MCF 10A (cell line): ENCODE measurements at regions of chr12 and their contacts with region 1.

Region 1: DNA sequence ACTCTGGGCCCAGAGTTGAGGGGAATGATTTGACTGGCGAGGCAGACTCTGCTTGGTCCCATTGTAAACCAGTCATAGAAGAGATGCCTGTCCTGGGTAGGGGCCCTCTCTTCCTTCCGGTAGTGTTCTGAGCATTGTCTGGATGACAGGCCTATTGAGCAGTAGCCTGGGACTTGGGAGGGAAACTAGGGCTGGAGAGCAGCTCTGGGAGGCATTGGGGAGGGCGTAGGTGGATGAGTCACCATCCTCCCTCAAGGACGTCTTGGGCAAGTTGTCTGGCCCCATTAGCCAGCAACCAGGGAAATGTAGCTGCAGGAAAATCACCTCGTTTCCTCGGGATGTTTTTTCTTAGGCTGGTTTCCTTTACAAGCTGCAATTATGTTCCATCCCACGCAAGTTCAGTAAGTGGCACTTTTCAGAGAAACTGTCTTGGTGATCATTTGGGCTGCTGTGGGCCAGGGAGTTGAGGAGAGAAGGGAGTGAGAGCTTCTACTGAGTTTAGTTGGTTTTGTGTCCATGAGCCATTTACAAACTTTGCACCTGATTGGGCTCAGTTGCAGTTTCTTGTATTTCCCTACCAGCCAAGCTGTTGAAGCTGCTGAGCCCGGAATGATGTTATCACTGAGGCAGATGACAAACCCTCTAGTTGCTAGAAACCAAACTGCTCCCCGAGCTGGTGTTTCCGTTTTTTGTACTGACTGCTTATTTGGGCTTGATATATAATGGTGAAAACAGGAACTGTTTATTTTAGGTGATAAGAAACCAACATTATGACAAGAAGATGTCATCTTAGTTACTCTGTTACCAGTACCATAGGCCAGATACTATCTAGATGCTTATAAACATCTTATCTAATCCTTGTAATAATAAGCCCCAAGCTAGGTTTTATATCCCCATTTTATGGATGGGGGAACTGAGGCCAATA is 147.6 kb downstream of the CHST11 start:
- DNase-seq: peak; percentile 96
- H3K4me3 Mint-ChIP-seq: peak overlapping the region; percentile 19
- H3K27ac Mint-ChIP-seq: peak overlapping the region; percentile 20
- H3K4me1 Mint-ChIP-seq: peaks cover 30% of the 10 kb centered on the region
- H3K27me3 Mint-ChIP-seq: no peaks in the 10 kb centered on the region
- CTCF ChIP-seq: no peak

Region 2: DNA sequence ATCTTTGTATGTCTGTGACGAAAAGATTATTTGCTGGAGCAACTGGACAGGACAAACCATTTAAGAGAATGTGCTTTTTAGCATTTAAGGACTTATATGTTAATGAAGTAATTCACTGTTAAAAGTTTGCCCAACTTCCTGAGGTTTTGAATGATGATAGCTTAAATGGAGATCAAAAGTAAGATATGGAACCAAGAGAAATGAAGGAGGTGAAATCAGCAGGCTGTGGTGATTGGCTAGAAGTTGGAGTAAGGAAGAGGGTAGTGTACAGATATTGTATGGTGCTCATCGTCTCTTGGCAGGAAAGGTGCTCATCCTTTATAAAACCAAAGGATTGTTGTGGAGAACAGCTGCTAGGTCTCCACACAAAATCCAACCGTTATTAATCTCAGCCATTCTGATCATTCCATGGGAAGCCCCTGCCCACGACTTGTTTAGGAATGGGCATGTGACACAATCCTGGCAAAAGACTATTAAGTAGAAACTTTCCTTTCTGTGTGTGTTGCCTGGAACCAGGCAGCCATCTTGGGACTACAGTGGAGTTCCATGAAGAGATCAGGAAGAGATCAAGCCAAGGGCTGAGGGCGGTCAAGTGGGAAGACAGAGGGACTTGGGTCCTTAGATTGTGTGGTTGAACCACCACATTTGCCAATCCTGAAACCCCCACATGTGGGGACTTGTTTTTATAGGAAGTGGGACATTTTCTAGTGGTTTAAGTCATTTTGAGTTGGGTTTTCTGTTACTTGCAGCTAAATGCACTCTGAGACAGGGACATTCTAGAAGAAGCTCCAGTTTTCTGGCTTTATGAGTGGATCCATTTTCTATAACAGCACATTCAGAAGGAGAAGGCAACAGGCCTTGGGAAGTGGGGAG is 204.4 kb before region 1 on chr12:
- CTCF ChIA-PET with region 1: no interaction called
- POLR2A ChIA-PET with region 1: no interaction called
- intact Hi-C with region 1: no loop called
- DNase-seq: no peak
- H3K4me3 Mint-ChIP-seq: no peak overlapping the region
- H3K27ac Mint-ChIP-seq: no peak overlapping the region
- H3K4me1 Mint-ChIP-seq: no peaks in the 10 kb centered on the region
- H3K27me3 Mint-ChIP-seq: no peaks in the 10 kb centered on the region
- CTCF ChIP-seq: no peak

Region 3: DNA sequence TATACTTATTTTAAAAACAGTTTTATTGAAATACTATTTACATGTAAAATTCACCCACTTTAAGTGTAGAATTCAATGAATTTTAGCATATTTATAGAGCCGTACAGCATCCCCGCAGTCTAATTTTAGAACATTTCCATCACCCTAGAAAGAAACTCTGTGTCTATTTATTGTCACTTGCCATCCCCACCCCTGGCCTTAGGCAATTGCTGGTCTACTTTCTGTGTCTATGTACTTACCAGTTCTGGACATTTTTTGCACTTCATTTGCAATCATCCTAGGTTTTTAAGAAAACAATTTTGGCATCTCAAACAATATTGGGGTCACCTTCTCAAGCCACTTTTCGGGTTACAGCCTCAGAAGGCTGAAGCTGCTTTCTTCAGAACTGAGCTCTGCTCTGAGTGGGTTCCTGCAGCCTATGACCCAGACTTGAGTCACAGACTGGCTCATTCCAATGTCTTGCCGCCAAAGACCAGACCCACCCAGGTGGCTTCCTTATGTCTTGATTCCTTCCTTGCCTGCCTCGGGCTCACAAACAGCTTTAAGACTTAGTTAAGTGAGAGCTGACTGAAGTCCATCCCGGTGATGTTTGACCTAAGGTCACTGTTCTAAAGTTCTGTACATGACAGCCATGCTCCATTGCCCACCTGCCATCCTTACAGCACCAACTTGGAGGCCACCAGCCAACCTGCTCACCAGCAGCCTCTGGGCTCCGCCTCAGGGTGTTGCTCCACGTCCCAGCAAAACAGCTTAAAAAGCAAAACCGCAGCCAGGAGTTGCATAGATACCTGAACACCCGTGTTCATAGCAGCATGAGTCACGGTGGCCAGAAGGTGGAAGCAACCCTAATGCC is 16.0 kb before region 1 on chr12:
- CTCF ChIA-PET with region 1: interaction called, 5 read pairs
- POLR2A ChIA-PET with region 1: interaction called, 13 read pairs
- intact Hi-C with region 1: no loop called
- DNase-seq: peak; percentile 83
- H3K4me3 Mint-ChIP-seq: peak overlapping the region; percentile 52
- H3K27ac Mint-ChIP-seq: peak overlapping the region; percentile 90
- H3K4me1 Mint-ChIP-seq: peaks cover 25% of the 10 kb centered on the region
- H3K27me3 Mint-ChIP-seq: no peaks in the 10 kb centered on the region
- CTCF ChIP-seq: no peak

Region 4: GRCh38 chr12:104653730-104654664 is 49.7 kb after region 1 on chr12:
- CTCF ChIA-PET with region 1: no interaction called
- POLR2A ChIA-PET with region 1: no interaction called
- intact Hi-C with region 1: no loop called
- DNase-seq: peak; percentile 41
- H3K4me3 Mint-ChIP-seq: no peak overlapping the region
- H3K27ac Mint-ChIP-seq: no peak overlapping the region
- H3K4me1 Mint-ChIP-seq: peaks cover 9% of the 10 kb centered on the region
- H3K27me3 Mint-ChIP-seq: no peaks in the 10 kb centered on the region
- CTCF ChIP-seq: no peak

Region 5: DNA sequence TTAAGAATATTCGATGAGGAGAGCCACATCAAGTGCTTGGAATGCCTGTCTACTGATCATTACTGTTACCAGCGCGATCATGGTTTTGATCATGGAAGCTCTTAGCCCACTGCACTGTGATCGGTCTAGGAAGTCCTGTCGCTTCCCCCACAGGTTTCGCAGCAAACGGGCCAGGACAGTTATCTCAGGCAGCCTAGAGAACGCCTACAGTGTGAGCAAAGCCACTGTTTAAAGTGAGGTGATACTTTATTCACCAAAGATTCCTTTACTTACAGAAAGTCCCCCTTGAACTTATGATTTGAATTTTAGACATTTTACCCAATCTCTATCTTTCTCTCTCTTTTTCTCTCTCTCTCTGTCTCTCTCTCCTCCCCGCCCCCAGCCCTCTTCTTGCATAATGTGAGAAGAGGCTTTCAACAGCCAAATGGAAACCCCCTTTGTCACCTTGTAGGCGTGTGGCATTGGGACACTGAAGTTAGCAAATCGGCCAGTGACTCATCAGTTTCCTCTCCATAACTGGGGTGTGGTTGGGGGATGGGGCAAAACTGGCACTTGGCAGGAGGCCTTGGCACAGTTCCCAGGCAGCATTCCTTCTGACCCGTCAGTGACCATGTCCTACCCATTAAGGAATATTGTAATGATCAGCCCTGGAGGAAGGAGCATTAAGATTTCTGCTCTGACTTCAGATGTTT is 67.2 kb after region 1 on chr12:
- CTCF ChIA-PET with region 1: no interaction called
- POLR2A ChIA-PET with region 1: interaction called, 5 read pairs
- intact Hi-C with region 1: loop called (anchors 5 kb)
- DNase-seq: peak; percentile 98
- H3K4me3 Mint-ChIP-seq: peak overlapping the region; percentile 30
- H3K27ac Mint-ChIP-seq: peak overlapping the region; percentile 90
- H3K4me1 Mint-ChIP-seq: peaks cover 49% of the 10 kb centered on the region
- H3K27me3 Mint-ChIP-seq: no peaks in the 10 kb centered on the region
- CTCF ChIP-seq: no peak